T-cell (primary cell): ENCODE measurements at regions of chr14 and their contacts with region 1.

Region 1: GRCh38 chr14:56310643-56311042 is 192.4 kb downstream of the PELI2 start:
- DNase-seq: no peak
- ATAC-seq: no peak
- H3K4me3 ChIP-seq: no peak overlapping the region
- H3K4me3 Mint-ChIP-seq: no peak overlapping the region
- H3K27ac ChIP-seq: no peak overlapping the region
- H3K27ac Mint-ChIP-seq: no peak overlapping the region
- H3K4me1 ChIP-seq: no peaks in the 10 kb centered on the region
- H3K4me1 Mint-ChIP-seq: no peaks in the 10 kb centered on the region
- H3K27me3 ChIP-seq: no peaks in the 10 kb centered on the region
- H3K27me3 Mint-ChIP-seq: no peaks in the 10 kb centered on the region

Region 2: GRCh38 chr14:55500219-55500701 is 810.4 kb before region 1 on chr14:
- CTCF ChIA-PET with region 1: no interaction called
- POLR2A ChIA-PET with region 1: no interaction called
- DNase-seq: no peak
- ATAC-seq: no peak
- H3K4me3 ChIP-seq: no peak overlapping the region
- H3K4me3 Mint-ChIP-seq: no peak overlapping the region
- H3K27ac ChIP-seq: no peak overlapping the region
- H3K27ac Mint-ChIP-seq: no peak overlapping the region
- H3K4me1 ChIP-seq: no peaks in the 10 kb centered on the region
- H3K4me1 Mint-ChIP-seq: no peaks in the 10 kb centered on the region
- H3K27me3 ChIP-seq: peaks cover 0 to 5% of the 10 kb centered on the region in 2 experiments
- H3K27me3 Mint-ChIP-seq: peaks cover 0 to 25% of the 10 kb centered on the region in 2 donors

Region 3: GRCh38 chr14:56271970-56272369 is 38.7 kb before region 1 on chr14:
- CTCF ChIA-PET with region 1: no interaction called
- POLR2A ChIA-PET with region 1: no interaction called
- DNase-seq: no peak
- ATAC-seq: no peak
- H3K4me3 ChIP-seq: no peak overlapping the region
- H3K4me3 Mint-ChIP-seq: no peak overlapping the region
- H3K27ac ChIP-seq: no peak overlapping the region
- H3K27ac Mint-ChIP-seq: no peak overlapping the region
- H3K4me1 ChIP-seq: no peaks in the 10 kb centered on the region
- H3K4me1 Mint-ChIP-seq: no peaks in the 10 kb centered on the region
- H3K27me3 ChIP-seq: no peaks in the 10 kb centered on the region
- H3K27me3 Mint-ChIP-seq: no peaks in the 10 kb centered on the region

Region 4: DNA sequence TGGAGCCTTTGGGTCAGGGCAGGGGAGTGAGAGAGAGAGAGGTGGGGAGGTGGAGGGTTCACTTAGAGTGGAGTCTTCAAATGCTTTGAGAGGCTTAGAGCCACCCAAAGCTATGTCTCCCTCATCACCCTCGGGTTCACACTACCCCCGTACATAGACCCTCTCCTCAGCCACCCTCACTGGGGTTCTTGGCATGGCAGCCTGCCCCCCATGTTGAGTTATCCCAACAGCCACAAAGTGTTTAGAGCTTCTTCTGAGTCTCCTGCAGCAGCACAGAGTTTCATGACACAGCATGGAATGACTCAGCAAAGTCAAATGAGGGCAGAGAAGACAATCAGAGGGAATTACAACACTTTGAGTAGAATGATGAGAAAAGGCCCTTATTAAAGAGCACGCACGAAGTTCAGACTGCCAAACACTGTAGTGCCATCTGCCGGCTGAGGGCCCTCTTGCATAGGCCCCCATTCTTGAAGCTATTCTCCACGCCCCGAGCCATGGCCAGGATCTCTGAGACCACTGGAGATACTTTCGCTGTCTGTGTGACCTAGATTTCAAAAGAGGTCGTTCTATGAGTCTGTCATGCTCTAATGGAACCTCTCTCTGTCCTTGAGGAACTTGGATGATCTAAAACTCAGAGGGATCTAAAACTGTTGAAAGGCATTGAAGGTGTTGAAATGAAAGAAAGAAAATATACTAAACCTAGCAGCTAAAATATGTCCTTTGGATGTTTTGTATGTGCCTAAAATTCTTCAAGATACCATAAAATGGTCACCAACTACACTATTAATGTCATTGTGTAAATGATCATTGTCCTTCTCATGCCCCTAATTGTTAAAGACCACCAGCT is 29.4 kb after region 1 on chr14:
- CTCF ChIA-PET with region 1: no interaction called
- POLR2A ChIA-PET with region 1: no interaction called
- DNase-seq: peak in 34 of 35 experiments; percentile 3 to 64 (median 42)
- ATAC-seq: peak in 3 of 4 experiments; percentile 58 to 72 (median 64)
- H3K4me3 ChIP-seq: no peak overlapping the region
- H3K4me3 Mint-ChIP-seq: no peak overlapping the region
- H3K27ac ChIP-seq: no peak overlapping the region
- H3K27ac Mint-ChIP-seq: no peak overlapping the region
- H3K4me1 ChIP-seq: peaks cover 0 to 4% of the 10 kb centered on the region in 2 experiments
- H3K4me1 Mint-ChIP-seq: peaks cover 4 to 5% (median 4%) of the 10 kb centered on the region in 3 donors
- H3K27me3 ChIP-seq: no peaks in the 10 kb centered on the region
- H3K27me3 Mint-ChIP-seq: no peaks in the 10 kb centered on the region

Region 5: GRCh38 chr14:57182760-57183503 is 872.3 kb after region 1 on chr14:
- CTCF ChIA-PET with region 1: no interaction called
- POLR2A ChIA-PET with region 1: interaction called in 1 of 2 experiments, 11 read pairs
- DNase-seq: no peak
- ATAC-seq: no peak
- H3K4me3 ChIP-seq: no peak overlapping the region
- H3K4me3 Mint-ChIP-seq: no peak overlapping the region
- H3K27ac ChIP-seq: no peak overlapping the region
- H3K27ac Mint-ChIP-seq: no peak overlapping the region
- H3K4me1 ChIP-seq: no peaks in the 10 kb centered on the region
- H3K4me1 Mint-ChIP-seq: no peaks in the 10 kb centered on the region
- H3K27me3 ChIP-seq: peaks cover 0 to 3% of the 10 kb centered on the region in 2 experiments
- H3K27me3 Mint-ChIP-seq: peaks cover 6 to 27% of the 10 kb centered on the region in 2 donors